ENCODE measurements at regions of chr5 and their contacts with region 1.

Region 1: GRCh38 chr5:170420780-170421412 is 31.7 kb upstream of the KCNMB1 start:
- DNase-seq: peak; percentile 82
- H3K4me3 Mint-ChIP-seq: no peak overlapping the region
- H3K27ac Mint-ChIP-seq: no peak overlapping the region
- H3K4me1 Mint-ChIP-seq: no peaks in the 10 kb centered on the region
- H3K27me3 Mint-ChIP-seq: peaks cover 45% of the 10 kb centered on the region
- CTCF ChIP-seq: peak; percentile 78

Region 2: GRCh38 chr5:169701910-169702451 is 718.9 kb before region 1 on chr5:
- CTCF ChIA-PET with region 1: interaction called, 3 read pairs
- POLR2A ChIA-PET with region 1: no interaction called
- intact Hi-C with region 1: loop called (anchors 2 kb)
- DNase-seq: peak; percentile 56
- H3K4me3 Mint-ChIP-seq: no peak overlapping the region
- H3K27ac Mint-ChIP-seq: no peak overlapping the region
- H3K4me1 Mint-ChIP-seq: peaks cover 33% of the 10 kb centered on the region
- H3K27me3 Mint-ChIP-seq: no peaks in the 10 kb centered on the region
- CTCF ChIP-seq: peak; percentile 82

Region 3: DNA sequence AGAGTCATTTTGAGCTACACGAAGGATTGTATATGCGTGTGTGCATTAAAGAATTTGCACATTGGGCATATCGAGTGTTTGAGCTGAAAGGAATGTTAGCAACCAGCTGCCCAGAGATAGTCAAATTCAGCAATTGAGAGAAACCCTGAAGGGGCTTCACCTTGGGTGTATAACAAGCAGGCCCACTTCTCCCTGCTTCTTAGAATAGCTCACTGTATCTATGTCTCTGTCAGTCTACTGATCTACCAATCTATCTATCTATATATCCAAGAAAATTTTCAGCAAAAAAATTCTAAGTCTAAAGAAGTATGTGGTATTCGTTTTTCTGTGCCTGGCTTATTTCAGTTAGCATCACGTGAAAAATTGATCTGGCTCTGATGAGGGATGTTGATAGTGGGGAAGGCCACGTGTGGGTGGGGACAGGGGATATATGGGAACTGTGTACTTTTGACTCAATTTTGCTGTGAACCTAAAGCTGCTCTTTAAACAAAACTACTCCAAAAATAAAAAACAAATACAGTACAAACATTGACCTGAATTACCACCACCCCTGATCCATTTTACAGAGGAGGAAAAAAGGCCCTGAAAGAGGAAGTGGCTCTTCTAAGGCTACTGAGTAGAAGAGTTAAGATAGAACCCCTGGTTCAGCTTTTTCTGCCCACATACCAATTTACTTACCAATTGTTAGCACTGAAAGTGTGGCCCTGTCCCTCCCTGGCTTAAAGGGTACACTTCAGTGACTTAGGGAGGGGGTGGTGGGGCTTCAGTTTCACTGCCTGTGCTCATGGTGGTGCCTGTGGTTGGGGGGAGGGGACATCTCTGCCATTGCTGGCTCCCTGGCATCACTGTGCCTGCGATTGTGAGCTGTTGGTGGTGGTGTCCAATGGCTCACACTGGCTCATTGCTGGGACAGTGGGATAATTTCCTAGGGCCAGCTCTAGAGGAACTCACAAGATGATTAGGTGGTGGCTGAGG is 642.0 kb before region 1 on chr5:
- CTCF ChIA-PET with region 1: no interaction called
- POLR2A ChIA-PET with region 1: no interaction called
- intact Hi-C with region 1: no loop called
- DNase-seq: no peak
- H3K4me3 Mint-ChIP-seq: no peak overlapping the region
- H3K27ac Mint-ChIP-seq: no peak overlapping the region
- H3K4me1 Mint-ChIP-seq: peaks cover 7% of the 10 kb centered on the region
- H3K27me3 Mint-ChIP-seq: no peaks in the 10 kb centered on the region
- CTCF ChIP-seq: no peak

Region 4: DNA sequence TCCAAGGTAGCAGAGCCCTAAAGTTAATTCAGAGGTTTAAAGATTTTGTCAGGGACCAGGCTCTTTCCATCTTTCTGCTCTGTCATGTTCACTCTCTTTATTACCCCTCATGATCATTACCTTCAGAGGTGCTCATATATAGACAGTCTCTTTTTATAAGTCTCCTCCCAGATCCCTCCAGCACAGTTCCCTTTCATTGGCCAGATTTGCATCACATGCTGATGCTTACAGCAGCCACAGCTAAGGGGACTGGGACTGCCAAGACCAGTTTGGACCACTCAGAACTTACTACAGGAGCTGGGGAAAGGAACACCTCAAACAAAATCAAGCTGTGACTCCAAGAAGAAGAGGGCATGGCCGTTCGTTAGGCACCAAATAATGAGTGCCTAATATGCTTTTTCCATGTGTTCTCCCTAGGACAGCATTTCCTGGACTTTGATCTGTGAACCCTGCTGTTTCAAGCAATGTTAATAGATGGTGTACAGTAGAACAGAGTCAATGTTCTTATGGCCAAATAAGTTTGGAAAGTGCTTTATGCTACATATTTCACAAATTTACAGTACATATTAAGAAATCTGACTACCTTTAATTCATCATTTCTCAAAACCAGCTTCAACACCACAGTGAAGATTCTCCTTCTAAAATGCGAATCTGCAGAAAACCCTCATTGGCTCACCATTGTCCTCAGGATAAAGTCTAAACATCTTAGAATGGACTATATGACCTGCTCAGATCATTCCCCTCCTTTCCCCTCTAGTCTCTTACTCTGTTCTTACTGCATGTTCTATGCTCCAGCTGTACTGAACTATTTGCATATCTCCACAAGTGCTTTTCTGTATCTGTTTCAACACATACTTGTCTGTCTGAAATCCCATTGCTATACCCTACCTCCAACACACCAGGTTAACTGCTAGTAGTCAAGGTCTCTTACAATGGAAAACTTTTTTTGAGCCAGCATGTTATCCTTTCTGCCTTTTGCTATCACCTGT is 184.7 kb before region 1 on chr5:
- CTCF ChIA-PET with region 1: interaction called, 23 read pairs
- POLR2A ChIA-PET with region 1: no interaction called
- intact Hi-C with region 1: no loop called
- DNase-seq: no peak
- H3K4me3 Mint-ChIP-seq: no peak overlapping the region
- H3K27ac Mint-ChIP-seq: no peak overlapping the region
- H3K4me1 Mint-ChIP-seq: no peaks in the 10 kb centered on the region
- H3K27me3 Mint-ChIP-seq: peaks cover 22% of the 10 kb centered on the region
- CTCF ChIP-seq: no peak

Region 5: DNA sequence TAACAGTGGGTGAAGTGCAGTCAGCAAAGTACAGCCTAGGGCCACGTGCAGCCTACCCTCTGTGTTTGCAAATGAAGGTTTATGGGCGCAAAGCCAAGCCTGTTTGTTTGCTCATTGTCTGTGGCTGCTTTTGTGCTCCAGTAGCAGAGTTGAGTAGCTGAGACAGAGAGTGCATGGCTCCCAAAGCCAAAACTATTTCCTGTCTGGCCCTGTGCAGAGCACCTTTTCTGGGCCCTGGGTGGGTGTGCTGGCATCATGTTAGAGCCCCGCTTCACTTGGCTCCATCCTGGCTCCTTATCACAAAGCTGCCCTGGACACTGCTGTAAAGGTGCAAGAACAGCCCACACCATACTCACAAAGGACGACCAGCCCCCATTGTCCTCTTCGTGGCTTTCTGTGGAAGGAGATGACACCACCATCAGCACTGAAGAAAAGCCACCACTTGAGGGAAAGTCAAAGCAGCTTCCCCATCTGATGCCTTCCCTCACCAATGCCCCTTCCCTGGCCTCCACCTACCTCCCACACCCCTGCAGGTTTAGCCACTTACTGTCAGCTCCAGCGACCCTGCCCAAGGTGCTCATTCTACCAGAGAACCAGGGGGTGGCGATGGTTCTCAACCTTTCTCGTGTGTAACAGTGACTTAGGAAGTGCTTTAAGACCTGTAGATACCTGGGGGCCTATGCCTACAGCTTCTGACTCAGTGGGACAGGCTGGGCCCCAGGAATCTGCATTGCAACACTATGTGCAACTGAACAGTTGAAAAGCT is 146.8 kb before region 1 on chr5:
- CTCF ChIA-PET with region 1: interaction called, 221 read pairs
- POLR2A ChIA-PET with region 1: no interaction called
- intact Hi-C with region 1: loop called (anchors 1 kb)
- DNase-seq: peak; percentile 67
- H3K4me3 Mint-ChIP-seq: no peak overlapping the region
- H3K27ac Mint-ChIP-seq: no peak overlapping the region
- H3K4me1 Mint-ChIP-seq: no peaks in the 10 kb centered on the region
- H3K27me3 Mint-ChIP-seq: no peaks in the 10 kb centered on the region
- CTCF ChIP-seq: peak; percentile 34

Region 6: DNA sequence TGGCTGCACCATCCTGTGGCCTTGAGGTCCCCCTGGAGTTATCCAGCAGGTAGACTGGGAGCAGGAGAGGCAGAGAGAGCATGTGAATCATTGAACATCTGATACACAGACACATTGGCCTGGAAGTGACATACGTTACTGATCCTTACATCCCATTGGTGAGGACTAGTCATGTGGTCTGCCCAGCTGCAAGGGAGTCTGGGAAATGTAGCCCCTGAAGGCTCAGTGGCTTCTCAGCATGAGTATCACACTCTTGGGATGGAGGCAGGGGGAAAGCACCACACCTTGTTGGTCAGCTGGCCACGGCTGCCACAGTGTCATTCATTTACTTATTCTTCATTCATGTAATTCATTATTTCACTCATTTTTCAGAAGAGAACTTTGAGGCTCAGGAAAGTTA is 18.4 kb before region 1 on chr5:
- CTCF ChIA-PET with region 1: interaction called, 29 read pairs
- POLR2A ChIA-PET with region 1: interaction called, 4 read pairs
- intact Hi-C with region 1: no loop called
- DNase-seq: no peak
- H3K4me3 Mint-ChIP-seq: no peak overlapping the region
- H3K27ac Mint-ChIP-seq: no peak overlapping the region
- H3K4me1 Mint-ChIP-seq: no peaks in the 10 kb centered on the region
- H3K27me3 Mint-ChIP-seq: peaks cover 7% of the 10 kb centered on the region
- CTCF ChIP-seq: no peak

Region 7: DNA sequence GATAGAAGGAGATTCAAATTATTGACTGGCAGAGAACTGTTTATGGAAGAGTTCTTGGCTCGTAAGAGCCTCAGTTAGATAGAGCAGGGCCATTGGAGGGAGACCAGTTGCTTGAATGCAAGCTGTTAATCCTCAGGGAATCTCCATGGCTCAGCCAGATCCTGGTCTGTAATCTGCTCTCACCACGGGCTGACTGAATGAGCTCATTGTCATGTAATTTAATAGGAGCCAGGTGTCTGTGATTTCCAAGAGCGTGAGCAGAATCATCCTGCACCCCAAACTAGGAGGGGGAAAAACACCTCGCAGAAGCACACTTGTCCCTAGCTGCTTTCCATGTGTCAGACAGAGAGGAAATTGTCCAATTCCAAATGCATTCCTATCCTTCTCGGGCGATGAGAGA is 12.7 kb before region 1 on chr5:
- CTCF ChIA-PET with region 1: interaction called, 29 read pairs
- POLR2A ChIA-PET with region 1: no interaction called
- intact Hi-C with region 1: no loop called
- DNase-seq: no peak
- H3K4me3 Mint-ChIP-seq: no peak overlapping the region
- H3K27ac Mint-ChIP-seq: no peak overlapping the region
- H3K4me1 Mint-ChIP-seq: no peaks in the 10 kb centered on the region
- H3K27me3 Mint-ChIP-seq: peaks cover 20% of the 10 kb centered on the region
- CTCF ChIP-seq: no peak

Region 8: DNA sequence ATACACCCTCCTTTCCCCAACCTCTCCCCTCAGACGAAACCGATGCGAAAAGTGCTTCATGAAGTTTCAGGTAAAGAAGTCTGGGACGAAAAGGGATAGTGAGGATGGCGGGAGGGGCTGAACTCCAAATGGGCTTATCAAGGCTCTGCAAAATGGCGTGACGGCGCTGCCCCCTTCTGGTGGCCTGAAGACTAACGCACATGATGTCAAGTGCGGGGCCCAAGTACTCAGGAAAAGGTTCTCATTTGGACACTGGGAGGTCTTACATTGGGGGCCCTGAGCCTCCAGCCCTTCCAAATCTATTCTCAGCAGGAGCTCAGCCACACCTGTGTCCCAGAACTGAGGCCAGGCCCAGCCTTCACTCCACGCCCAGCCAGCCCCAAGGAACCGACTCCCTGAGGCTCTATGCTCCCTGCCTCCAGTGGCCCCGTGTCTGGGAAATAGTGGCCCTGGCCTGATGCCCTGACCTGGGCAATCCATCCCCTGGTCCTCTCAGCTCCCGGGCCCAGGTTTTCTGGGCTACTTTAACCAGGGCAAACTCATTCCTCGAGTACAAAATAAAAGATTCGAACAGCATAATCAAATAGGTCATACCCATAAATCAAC is 202.8 kb after region 1 on chr5:
- CTCF ChIA-PET with region 1: interaction called, 132 read pairs
- POLR2A ChIA-PET with region 1: no interaction called
- intact Hi-C with region 1: no loop called
- DNase-seq: peak; percentile 78
- H3K4me3 Mint-ChIP-seq: no peak overlapping the region
- H3K27ac Mint-ChIP-seq: no peak overlapping the region
- H3K4me1 Mint-ChIP-seq: no peaks in the 10 kb centered on the region
- H3K27me3 Mint-ChIP-seq: peaks cover 27% of the 10 kb centered on the region
- CTCF ChIP-seq: peak; percentile 97

Region 9: GRCh38 chr5:170848033-170848432 is 427.1 kb after region 1 on chr5:
- CTCF ChIA-PET with region 1: no interaction called
- POLR2A ChIA-PET with region 1: no interaction called
- intact Hi-C with region 1: no loop called
- DNase-seq: peak; percentile 56
- H3K4me3 Mint-ChIP-seq: no peak overlapping the region
- H3K27ac Mint-ChIP-seq: peak overlapping the region; percentile 6
- H3K4me1 Mint-ChIP-seq: peaks cover 31% of the 10 kb centered on the region
- H3K27me3 Mint-ChIP-seq: no peaks in the 10 kb centered on the region
- CTCF ChIP-seq: no peak